ENCODE measurements at regions of chr14 and their contacts with region 1.

Region 1: DNA sequence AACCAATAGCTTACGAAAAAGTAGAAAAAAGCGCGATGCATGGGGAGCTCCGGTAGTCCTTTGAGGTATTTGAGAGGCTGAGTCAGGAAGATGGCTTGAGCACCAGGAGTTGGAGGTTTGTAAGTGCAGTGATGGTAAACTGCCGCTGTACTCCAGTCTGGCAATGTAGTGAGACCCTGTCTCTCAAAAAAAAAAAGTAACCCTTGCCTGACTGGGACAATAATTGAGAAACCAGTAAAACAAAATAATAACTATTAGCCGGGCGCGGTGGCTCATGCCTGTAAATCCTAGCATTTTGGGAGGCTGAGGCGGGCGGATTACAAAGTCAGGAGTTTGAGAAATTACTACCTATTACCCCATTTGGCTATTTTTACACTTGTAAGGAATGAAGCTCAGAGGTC is 632 bp upstream of the ACOT2 start:
- DNase-seq: no peak
- H3K4me3 ChIP-seq: peak overlapping the region; percentile 65
- H3K27ac ChIP-seq: 0 out of 2 replicates have a peak overlapping the region, but pooled peaks have one; percentile 3
- H3K4me1 ChIP-seq: peaks cover 27% of the 10 kb centered on the region
- H3K27me3 ChIP-seq: no peaks in the 10 kb centered on the region
- CTCF ChIP-seq: no peak

Region 2: DNA sequence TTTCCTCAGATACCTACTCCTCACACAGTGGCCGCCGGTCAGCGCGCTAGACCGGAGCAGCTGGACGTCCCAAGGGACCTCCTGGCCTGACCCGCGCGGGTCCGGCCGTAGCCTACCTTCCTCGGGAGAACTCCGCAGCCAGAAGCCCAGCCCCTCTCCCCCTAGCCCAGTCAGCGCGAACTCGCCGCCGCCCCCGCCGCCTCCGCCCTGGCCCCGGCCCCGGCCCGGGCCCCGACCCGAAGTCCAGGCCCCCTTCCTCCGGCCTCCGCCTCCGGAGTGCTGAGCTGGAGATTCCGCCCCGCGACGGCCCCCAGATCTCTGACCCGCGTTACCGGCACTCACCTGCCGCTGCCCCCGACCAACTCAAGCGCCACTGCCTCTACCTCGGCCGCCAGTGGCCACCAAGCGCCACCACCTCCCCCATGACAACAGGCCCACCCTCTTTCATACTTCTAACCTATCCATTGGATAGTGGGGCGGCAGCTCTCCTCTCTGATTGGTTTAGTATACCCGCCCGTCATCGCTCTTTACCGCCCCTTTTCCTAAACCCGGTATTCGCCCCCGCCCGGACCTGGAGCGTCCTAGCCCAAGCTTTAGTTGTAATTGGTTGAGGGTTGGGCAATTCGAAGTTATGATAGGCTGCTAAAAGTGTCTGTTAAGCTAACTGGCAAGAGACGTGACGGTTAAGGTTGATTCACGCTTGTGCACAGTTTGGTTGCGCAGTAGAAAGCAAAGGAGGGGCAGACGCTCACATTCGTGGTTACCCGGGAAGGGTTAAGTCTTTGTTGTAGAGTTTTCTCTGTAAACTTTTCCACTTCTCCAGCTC is 110.0 kb before region 1 on chr14 and contains the start of gene NUMB:
- CTCF ChIA-PET with region 1: no interaction called
- POLR2A ChIA-PET with region 1: interaction called, 22 read pairs
- intact Hi-C with region 1: no loop called
- DNase-seq: peak; percentile 97 to 99
- H3K4me3 ChIP-seq: peak within 1 kb of the TSS; percentile 86
- H3K27ac ChIP-seq: 0 out of 2 replicates have a peak within 1 kb of the TSS, but pooled peaks have one; percentile 18
- H3K4me1 ChIP-seq: peaks cover 30% of the 10 kb centered on the region
- H3K27me3 ChIP-seq: no peaks in the 10 kb centered on the region
- CTCF ChIP-seq: no peak
- total RNA-seq, gene NUMB: 59.2 and 64.5 TPM in 2 replicates

Region 3: GRCh38 chr14:73467377-73467776 is 101.0 kb before region 1 on chr14:
- CTCF ChIA-PET with region 1: interaction called, 12 read pairs
- POLR2A ChIA-PET with region 1: no interaction called
- intact Hi-C with region 1: no loop called
- DNase-seq: no peak
- H3K4me3 ChIP-seq: no peak overlapping the region
- H3K27ac ChIP-seq: no peak overlapping the region
- H3K4me1 ChIP-seq: peaks cover 7% of the 10 kb centered on the region
- H3K27me3 ChIP-seq: no peaks in the 10 kb centered on the region
- CTCF ChIP-seq: no peak

Region 4: GRCh38 chr14:73503648-73504047 is 64.7 kb before region 1 on chr14:
- CTCF ChIA-PET with region 1: interaction called, 23 read pairs
- POLR2A ChIA-PET with region 1: interaction called, 3 read pairs
- intact Hi-C with region 1: no loop called
- DNase-seq: no peak
- H3K4me3 ChIP-seq: no peak overlapping the region
- H3K27ac ChIP-seq: no peak overlapping the region
- H3K4me1 ChIP-seq: no peaks in the 10 kb centered on the region
- H3K27me3 ChIP-seq: no peaks in the 10 kb centered on the region
- CTCF ChIP-seq: no peak

Region 5: DNA sequence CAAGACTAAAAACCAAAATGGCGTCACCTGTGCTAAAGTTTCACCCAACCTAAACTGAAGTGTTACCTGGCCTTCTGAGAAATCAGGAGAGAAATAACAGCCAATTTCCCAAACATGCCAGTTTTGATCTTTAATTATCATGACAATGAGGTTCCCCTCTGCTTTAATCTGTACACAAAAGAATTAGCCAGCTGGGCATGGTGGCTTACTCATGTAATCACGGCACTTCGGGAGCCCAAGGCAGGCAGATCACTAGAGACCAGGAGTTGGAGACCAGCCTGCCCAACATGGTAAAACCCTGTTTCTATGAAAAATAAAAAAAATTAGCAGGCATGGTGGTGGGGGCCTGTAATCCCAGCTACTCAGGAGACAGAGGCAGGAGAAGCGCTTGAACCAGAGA is 14.5 kb before region 1 on chr14:
- CTCF ChIA-PET with region 1: no interaction called
- POLR2A ChIA-PET with region 1: no interaction called
- intact Hi-C with region 1: no loop called
- DNase-seq: no peak
- H3K4me3 ChIP-seq: no peak overlapping the region
- H3K27ac ChIP-seq: no peak overlapping the region
- H3K4me1 ChIP-seq: no peaks in the 10 kb centered on the region
- H3K27me3 ChIP-seq: no peaks in the 10 kb centered on the region
- CTCF ChIP-seq: no peak

Region 6: GRCh38 chr14:73589116-73589515 is 20.7 kb after region 1 on chr14:
- CTCF ChIA-PET with region 1: no interaction called
- POLR2A ChIA-PET with region 1: no interaction called
- intact Hi-C with region 1: no loop called
- DNase-seq: no peak
- H3K4me3 ChIP-seq: no peak overlapping the region
- H3K27ac ChIP-seq: no peak overlapping the region
- H3K4me1 ChIP-seq: no peaks in the 10 kb centered on the region
- H3K27me3 ChIP-seq: no peaks in the 10 kb centered on the region
- CTCF ChIP-seq: no peak

Region 7: DNA sequence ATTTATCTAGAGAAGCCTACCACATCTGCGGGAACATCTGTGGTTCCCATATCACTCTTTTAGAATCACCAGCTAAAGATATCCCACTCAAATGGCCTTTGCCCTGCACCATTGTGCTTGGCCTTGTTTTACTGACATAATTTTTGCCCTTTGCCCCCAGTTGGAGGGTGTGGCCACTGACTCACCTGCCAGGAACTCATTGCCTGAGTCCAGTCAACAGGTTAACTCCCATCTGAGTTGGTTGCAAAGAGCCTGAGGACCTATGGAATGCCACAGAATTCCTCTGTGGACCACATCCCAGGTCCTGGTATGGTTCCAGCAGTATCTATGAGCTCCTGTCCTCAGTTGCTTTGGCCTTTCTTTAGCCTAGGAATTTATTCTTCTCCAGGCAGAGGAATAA is 227.6 kb after region 1 on chr14:
- CTCF ChIA-PET with region 1: no interaction called
- POLR2A ChIA-PET with region 1: interaction called, 15 read pairs
- intact Hi-C with region 1: no loop called
- DNase-seq: peak; percentile 90 to 94
- H3K4me3 ChIP-seq: no peak overlapping the region
- H3K27ac ChIP-seq: peak overlapping the region; percentile 88
- H3K4me1 ChIP-seq: peaks cover 46% of the 10 kb centered on the region
- H3K27me3 ChIP-seq: no peaks in the 10 kb centered on the region
- CTCF ChIP-seq: no peak

Region 8: DNA sequence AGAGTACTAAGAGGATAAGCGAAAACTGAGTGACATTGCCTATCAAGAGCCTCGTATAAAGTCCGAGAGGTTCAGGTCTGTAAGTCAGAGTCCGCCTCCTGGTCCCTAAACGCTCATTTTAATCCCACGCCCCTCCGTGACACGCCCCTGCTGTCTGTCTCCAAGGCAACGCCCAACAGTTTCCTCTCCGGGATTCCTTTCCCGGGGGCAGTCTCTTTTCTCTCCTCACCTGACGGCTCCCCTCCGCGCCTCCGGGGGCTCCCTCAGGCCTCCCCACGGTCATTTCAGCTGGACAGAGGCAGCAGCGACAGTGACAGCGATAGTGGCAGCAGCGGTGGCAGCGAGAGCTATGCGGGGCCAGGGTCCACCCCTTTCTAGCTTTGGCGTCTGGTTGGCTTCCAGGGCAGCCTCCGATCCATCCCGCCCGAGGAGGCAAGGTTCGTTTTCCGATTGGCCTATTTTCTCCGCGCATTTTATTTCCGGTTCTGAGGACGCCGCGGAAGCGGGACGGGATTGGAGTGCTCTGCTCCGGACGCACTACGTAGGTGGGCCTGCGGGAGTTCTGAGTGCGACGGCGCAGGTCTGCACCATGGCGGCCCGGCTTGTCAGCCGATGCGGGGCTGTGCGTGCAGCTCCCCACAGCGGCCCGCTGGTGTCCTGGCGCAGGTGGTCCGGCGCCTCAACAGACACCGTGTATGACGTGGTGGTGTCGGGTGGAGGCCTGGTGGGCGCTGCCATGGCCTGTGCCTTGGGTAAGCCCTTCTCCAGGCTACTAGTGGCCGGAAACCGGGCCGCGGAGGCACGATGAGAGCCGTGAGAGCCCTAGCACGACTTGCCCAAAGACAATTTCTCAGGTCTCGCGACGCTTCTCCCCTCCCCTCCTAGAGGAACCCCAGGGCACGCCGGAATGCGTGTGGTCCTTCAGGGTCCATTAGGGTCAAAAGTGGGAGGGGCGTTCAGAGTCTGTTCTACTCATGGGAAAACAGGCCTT is 381.7 kb after region 1 on chr14 and contains the starts of genes COQ6 and FAM161B:
- CTCF ChIA-PET with region 1: no interaction called
- POLR2A ChIA-PET with region 1: interaction called, 17 read pairs
- intact Hi-C with region 1: no loop called
- DNase-seq: peak; percentile 95 to 96
- H3K4me3 ChIP-seq: peak within 1 kb of the TSS; percentile 83
- H3K27ac ChIP-seq: peak within 1 kb of the TSS; percentile 69
- H3K4me1 ChIP-seq: peaks cover 6% of the 10 kb centered on the region; the same call in 1 of the 2 replicates
- H3K27me3 ChIP-seq: no peaks in the 10 kb centered on the region
- CTCF ChIP-seq: no peak
- total RNA-seq, gene COQ6: 25.4 and 25.7 TPM in 2 replicates
- total RNA-seq, gene FAM161B: 1.6 TPM in 2 replicates

Region 9: DNA sequence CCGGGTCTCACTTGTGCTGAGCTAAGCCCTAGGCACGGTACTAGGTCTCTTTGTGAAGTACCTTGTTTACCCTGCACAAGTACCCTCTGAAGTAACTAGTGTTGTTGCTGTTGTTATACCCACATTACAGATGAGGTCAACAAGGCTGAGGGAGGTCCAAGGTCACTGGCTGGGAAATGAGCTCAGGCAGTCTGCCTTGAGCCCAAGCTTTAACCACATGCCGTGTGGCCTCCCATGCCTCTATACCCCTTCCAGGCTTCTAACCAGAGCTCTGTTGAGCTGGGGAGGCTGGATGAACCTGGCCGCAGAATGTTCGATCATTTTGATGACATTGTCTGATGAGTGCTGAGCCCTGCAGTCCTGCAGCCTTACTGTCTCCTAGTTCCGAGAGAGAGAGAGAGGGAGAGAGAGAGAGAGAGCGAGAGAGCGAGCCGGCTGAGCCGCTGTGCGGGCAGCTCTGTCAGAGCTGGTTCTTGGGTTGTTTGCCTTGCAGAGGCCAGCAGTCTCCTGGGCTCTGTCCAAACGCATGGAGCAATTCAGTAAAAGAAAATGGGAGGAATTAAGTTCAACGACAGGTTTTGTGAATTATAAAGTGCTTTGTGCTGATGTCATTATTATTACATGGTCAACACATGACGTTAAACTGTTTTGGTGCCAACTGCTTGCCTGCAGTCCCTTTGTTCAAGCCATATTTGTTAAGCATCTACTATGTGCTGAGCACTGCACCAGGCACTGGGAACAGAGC is 1872.5 kb after region 1 on chr14:
- CTCF ChIA-PET with region 1: no interaction called
- POLR2A ChIA-PET with region 1: interaction called, 13 read pairs
- intact Hi-C with region 1: no loop called
- DNase-seq: no peak
- H3K4me3 ChIP-seq: no peak overlapping the region
- H3K27ac ChIP-seq: no peak overlapping the region
- H3K4me1 ChIP-seq: peaks cover 25% of the 10 kb centered on the region
- H3K27me3 ChIP-seq: no peaks in the 10 kb centered on the region
- CTCF ChIP-seq: no peak